A673 (cell line): ENCODE measurements at regions of chr7 and their contacts with region 1.

Region 1: GRCh38 chr7:69906283-69906995 is 308.2 kb downstream of the AUTS2 start:
- DNase-seq: peak; percentile 38
- H3K4me3 ChIP-seq: no peak overlapping the region
- H3K27ac ChIP-seq: no peak overlapping the region
- H3K4me1 ChIP-seq: peaks cover 39% of the 10 kb centered on the region
- H3K27me3 ChIP-seq: no peaks in the 10 kb centered on the region
- CTCF ChIP-seq: no peak

Region 2: DNA sequence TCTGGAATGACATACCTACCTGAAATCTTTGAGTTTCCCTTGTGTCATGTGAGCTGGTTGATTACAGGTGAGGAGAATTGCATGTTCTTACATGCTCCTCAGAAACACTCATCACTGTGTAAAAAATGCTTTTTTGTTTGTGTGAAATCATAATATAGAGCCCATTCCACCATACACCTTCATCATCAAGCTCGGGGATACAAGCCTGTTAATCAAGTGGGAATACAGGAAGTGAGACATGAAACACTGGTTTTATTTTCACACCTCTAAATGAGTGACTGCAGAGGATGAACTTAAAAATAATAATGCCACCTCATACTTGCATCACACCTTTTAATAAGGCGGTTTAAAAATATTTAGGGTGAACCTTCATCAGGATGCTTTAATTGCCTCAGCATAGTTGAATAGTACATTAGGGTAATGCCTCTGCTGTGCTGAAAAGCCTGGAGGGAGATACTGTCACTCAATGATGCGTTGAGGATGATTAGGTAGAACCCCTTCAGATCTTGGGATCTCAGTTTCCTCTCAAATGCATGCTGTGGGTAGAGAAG is 143.6 kb before region 1 on chr7:
- CTCF ChIA-PET with region 1: no interaction called
- POLR2A ChIA-PET with region 1: no interaction called
- intact Hi-C with region 1: loop called (anchors 10 kb)
- DNase-seq: no peak
- H3K4me3 ChIP-seq: no peak overlapping the region
- H3K27ac ChIP-seq: no peak overlapping the region
- H3K4me1 ChIP-seq: peaks cover 11% of the 10 kb centered on the region
- H3K27me3 ChIP-seq: no peaks in the 10 kb centered on the region
- CTCF ChIP-seq: no peak

Region 3: GRCh38 chr7:69882269-69882668 is 24.2 kb before region 1 on chr7:
- CTCF ChIA-PET with region 1: no interaction called
- POLR2A ChIA-PET with region 1: no interaction called
- intact Hi-C with region 1: no loop called
- DNase-seq: no peak
- H3K4me3 ChIP-seq: no peak overlapping the region
- H3K27ac ChIP-seq: no peak overlapping the region
- H3K4me1 ChIP-seq: peaks cover 19% of the 10 kb centered on the region
- H3K27me3 ChIP-seq: no peaks in the 10 kb centered on the region
- CTCF ChIP-seq: no peak